Right ventricle myocardium inferior (tissue), 1 donor: ENCODE measurements at regions of chr19 and their contacts with region 1.

Region 1: DNA sequence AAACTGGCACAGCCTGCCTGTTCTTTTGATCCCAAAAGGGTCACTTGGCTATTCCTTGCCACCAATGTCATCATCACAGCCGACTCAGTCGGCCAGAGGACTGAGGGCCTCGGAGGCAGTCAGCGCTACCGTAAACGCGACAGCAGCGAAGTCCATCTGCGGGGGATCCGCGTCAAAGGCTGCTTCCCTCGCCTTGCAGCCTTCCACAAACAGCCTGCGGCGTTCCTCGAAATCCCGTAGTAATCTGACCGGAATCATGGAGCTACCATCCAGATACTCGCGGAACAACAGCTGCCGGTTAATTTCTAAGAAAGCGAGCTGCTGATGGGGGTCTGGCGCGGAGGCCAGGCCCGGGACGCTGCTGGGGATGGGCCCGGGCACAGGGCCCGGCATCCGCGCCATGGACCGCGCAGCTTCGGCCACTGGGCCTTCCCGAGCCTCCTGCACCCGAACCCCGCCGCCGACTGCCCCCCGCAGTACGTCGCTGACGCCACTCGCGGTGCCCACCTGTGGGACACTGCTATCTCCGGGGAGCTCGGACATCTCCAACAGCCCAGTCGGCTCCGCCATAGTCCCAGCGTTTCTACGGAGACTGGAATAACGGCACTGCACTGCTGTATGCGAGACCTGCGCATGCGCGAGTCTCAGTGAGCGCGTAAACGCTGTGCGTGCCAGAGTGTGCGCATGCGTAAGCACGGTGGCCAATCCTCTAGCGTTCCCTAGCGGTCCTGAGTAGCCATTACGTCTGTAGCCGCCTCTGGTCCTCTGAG is at the start of gene EID2B:
- DNase-seq: peak; percentile 99
- ATAC-seq: peak; percentile 98
- total RNA-seq, gene EID2B: 1.7 TPM

Region 2: DNA sequence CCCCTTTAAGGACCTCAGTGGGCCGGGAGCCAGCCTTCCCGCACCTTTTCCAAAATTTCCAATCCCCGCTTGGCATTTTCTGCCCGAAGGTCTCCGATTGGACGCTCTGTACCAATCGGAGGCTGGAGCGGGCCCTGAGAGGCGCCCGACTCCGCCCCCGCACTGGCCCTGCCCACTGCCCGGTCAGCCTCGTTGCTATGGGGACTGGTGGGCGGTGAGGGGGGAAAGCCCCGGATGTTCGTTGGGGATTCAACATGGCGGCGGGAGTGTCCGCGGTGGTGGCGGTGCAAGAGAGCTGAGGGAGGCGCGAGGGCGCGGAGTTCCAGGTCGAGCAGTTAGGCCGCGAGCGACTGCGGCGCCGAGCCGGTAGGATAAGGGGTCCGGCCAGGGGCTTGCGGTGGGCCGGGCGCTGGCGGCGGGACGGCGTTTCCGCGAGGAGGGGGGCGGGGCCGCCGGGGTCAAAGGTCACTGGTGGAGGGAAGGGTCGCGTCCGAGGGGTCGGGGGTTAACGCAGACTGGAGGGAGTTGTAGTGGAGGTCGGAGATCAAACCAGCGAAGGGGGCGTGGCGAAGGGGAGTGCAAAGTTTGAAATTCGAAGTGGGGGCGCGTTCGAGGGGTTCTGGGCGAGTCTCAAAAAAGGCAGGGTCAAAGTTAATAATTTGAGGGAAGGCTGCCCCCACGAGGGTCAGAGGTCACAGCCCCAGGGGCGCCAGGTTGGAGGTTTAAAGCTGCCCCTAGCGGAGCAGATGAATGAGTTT is 406.7 kb before region 1 on chr19 and contains the start of gene PAK4:
- intact Hi-C with region 1: loop called (anchors 10 kb)
- DNase-seq: peak; percentile 98
- ATAC-seq: peak; percentile 100
- total RNA-seq, gene PAK4: 16.2 TPM

Region 3: DNA sequence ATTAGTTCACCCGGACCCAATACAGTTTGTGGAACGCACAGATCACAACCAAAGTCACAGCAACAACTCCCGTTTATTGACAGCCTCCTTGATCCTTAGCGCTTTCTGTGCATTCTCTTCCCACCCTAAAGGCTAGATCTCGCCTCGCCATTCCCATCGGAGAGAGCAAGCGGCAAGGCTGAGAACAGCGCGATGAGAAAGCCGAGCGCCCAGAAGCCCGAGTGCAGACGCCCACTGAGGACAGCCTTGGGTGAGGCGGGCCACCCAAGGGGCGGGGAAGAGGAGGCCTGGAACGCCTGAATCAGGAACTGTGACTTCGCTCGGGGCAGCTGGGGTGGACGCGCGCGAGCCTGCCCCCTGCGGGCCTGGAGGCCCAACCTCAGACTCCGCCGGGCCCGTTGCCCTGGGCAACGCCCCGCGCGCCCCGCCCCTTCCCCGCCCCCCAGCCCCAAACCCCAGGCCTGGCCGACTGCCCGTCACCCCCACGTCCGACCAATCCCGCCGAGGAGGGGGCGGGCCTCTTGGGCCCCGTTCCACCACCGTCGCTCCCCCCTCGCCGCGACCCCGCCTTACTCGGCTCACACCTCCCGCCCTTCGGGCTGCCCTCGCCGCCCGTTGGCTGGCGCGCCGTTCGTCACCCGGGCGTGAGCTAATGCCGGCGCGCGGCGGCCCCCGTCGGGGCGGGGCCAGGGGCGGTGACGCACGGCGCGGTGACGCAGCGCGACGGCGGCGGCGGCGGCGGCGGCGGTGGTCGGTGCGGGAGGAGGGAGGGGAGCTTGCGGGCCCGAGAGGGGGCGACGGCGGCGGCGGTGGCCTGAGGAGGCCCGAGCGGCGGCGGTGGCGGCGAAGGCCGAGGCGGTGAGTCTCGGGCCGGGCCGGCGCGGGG is 190.5 kb before region 1 on chr19 and contains the start of gene SAMD4B:
- intact Hi-C with region 1: loop called (anchors 5 kb)
- DNase-seq: peak; percentile 99
- ATAC-seq: peak; percentile 98
- total RNA-seq, gene SAMD4B: 40.6 TPM

Region 4: GRCh38 chr19:39397360-39398296 is 134.8 kb before region 1 on chr19:
- intact Hi-C with region 1: loop called (anchors 5 kb)
- DNase-seq: peak; percentile 96
- ATAC-seq: peak; percentile 85

Region 5: DNA sequence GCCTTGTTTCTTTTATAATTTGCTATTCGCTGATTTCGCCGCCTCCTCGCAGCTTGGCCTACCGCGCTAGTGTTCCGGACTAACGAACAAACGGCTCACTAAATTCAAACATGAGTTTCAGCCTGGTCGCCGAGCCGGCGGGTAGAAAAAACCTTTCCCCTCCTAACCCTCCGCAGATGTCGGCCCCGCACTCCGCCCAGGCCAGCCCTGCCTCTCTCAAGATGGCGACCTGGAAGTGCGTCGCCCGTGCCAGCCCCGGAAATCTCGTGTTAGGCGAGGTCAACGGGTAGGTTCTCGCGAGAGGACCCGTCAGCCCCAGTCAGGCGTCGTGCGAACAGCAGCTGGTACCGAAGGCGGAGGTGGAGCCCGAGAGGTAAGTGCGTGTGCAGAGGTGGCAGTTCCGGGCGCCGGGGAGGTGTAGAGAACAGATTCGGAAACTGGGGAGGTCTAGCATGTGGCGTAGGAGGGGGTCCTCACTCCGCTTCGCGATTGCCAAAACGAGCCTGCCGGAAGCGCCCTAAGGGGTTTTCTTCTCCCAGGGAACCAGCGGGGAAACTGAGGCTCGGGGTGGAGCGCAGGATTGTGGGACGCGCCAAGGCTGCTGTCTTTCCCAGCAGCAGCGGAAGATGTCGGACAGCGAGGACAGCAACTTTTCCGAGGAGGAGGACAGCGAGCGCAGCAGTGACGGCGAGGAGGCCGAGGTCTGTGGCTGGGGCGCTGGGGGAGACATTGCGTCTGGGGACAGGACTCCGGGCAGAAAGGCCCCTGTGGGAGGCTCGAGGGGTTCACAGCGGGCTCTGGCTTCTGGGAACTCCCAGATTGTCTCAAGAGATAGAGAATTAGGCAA is 86.9 kb before region 1 on chr19 and contains the start of gene SUPT5H:
- intact Hi-C with region 1: loop called (anchors 10 kb)
- DNase-seq: peak; percentile 98
- ATAC-seq: peak; percentile 98
- total RNA-seq, gene SUPT5H: 80.6 TPM

Region 6: GRCh38 chr19:39474139-39474622 is 58.2 kb before region 1 on chr19:
- intact Hi-C with region 1: loop called (anchors 1 kb)
- DNase-seq: peak; percentile 87
- ATAC-seq: peak; percentile 54

Region 7: GRCh38 chr19:39497701-39497995 is 34.8 kb before region 1 on chr19:
- intact Hi-C with region 1: no loop called
- DNase-seq: no peak
- ATAC-seq: no peak

Region 8: DNA sequence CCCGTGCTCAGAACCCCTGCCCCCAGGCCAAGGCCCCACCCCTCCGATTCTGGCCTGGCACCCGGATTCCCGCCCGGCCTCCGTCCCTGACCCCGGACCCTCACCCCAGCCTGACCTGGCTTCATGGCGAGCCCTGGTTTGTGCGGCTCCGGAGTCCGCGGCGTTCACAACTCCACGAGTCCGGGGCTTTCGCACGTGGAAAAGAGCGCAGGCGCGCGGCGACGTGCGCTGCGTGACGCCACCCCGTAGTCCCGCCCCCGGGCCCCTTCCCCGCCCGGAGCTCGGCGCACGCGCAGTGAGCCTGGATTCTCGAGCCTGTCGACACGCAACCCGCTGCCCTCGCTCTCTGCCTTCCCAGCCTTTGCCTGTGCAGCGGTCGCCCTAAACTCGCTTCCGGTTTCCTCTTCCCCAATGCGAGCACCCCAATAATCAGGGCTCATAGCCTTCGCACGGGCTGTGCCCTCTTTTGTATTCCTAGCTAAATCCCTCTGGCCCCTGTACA is 313.8 kb after region 1 on chr19 and contains the start of gene FBL:
- intact Hi-C with region 1: loop called (anchors 10 kb)
- DNase-seq: peak; percentile 99
- ATAC-seq: peak; percentile 95
- total RNA-seq, gene FBL: 64.8 TPM